ENCODE measurements at regions of chr1 and their contacts with region 1.

Region 1: DNA sequence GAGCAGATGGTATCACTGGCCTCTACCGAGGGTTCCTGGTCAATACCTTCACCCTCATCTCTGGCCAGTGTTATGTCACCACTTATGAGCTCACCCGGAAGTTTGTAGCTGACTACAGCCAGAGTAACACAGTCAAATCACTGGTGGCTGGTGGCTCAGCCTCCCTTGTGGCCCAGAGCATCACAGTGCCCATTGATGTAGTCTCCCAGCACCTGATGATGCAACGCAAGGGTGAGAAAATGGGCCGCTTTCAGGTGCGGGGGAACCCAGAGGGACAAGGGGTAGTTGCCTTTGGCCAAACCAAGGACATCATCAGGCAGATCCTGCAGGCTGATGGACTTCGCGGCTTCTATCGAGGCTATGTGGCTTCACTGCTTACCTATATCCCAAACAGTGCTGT is 6.1 kb downstream of the SLC25A44 start:
- DNase-seq: no peak
- ATAC-seq: no peak
- H3K4me3 ChIP-seq: no peak overlapping the region
- H3K27ac ChIP-seq: no peak overlapping the region
- H3K4me1 ChIP-seq: peaks cover 0 to 5% (median 0%) of the 10 kb centered on the region in 3 donors
- H3K27me3 ChIP-seq: no peaks in the 10 kb centered on the region
- CTCF ChIP-seq: no peak

Region 2: DNA sequence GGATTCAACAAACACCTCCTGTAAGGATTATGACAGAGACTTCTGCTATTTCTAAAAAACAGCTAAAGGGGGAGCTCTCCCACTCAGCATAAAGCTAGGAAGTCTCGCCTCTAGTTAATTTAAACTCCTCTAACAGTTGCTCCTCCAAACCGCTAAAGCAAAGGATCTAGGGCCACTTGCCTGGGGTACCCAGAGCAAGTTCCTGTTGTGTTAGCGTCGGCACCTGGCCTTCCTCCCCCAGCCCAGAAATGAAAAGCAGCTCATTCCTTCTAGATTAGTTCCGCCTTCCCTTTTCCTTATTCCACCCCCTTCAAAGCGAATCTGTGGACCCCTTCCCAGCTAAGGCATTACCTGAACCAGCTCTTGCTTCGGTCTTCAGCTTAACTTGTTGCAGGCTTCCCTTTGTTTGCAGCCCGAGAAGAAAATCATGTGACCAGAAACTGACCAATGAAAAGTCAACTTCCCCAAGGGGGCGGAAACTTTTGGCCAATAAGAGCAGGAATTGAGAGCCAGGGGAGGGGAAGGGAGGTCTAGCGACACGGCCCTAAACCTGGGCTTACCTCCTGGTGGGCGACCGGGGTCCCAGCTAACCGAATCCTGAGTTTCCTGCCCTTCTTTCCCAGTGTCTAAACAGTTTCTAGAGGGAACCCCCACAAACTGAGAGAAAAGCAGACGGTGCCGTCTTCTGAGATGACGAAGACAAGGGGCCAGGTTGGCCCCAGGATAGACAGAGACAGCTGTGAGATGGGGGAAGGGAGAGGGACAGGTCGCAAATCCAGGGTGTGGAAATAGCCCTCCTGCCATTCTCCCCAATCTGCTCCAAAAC is 1244.1 kb before region 1 on chr1 and contains the start of gene PBXIP1:
- intact Hi-C with region 1: no loop called
- DNase-seq: peak in 3 of 6 donors; percentile 84 to 89 (median 84)
- ATAC-seq: peak; percentile 88 to 94 (median 92)
- H3K4me3 ChIP-seq: peak within 1 kb of the TSS; percentile 8 to 53 (median 36)
- H3K27ac ChIP-seq: peak within 1 kb of the TSS; percentile 61 to 80 (median 75)
- H3K4me1 ChIP-seq: peaks cover 15 to 23% (median 18%) of the 10 kb centered on the region in 3 donors
- H3K27me3 ChIP-seq: no peaks in the 10 kb centered on the region
- CTCF ChIP-seq: no peak
- total RNA-seq, gene PBXIP1: 15.6 to 53.1 (median 24.9) TPM

Region 3: GRCh38 chr1:155816351-155816750 is 383.7 kb before region 1 on chr1:
- intact Hi-C with region 1: no loop called
- DNase-seq: no peak
- ATAC-seq: no peak
- H3K4me3 ChIP-seq: no peak overlapping the region
- H3K27ac ChIP-seq: no peak overlapping the region
- H3K4me1 ChIP-seq: no peaks in the 10 kb centered on the region
- H3K27me3 ChIP-seq: no peaks in the 10 kb centered on the region
- CTCF ChIP-seq: no peak

Region 4: DNA sequence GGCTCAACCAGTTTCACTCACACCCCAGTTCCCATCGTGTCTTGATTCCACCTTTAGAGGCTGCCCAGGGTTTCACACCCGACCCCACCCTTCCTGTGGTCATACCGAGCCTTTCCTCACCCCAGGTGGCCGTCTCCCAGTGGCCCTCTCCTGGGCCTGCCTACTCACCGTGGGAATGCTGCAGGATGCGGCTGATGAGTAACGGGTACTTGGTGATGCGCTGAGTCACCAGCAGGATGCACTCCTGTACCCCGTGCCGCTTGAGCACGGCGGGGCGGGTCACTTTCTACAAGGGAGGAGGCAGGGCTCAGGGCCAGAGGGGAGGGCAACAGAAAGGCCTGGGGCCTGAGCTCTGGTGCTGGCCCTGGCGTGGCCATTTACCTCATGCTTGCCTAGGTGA is 238.1 kb before region 1 on chr1:
- intact Hi-C with region 1: no loop called
- DNase-seq: no peak
- ATAC-seq: peak in 3 of 4 donors; percentile 33 to 56 (median 45)
- H3K4me3 ChIP-seq: no peak overlapping the region
- H3K27ac ChIP-seq: no peak overlapping the region
- H3K4me1 ChIP-seq: no peaks in the 10 kb centered on the region
- H3K27me3 ChIP-seq: no peaks in the 10 kb centered on the region
- CTCF ChIP-seq: no peak

Region 5: GRCh38 chr1:156154317-156154749 is 45.7 kb before region 1 on chr1:
- intact Hi-C with region 1: loop called in 1 of 3 experiments (anchors 10 kb)
- DNase-seq: no peak
- ATAC-seq: peak in 3 of 4 donors; percentile 17 to 60 (median 45)
- H3K4me3 ChIP-seq: no peak overlapping the region
- H3K27ac ChIP-seq: no peak overlapping the region
- H3K4me1 ChIP-seq: no peaks in the 10 kb centered on the region
- H3K27me3 ChIP-seq: no peaks in the 10 kb centered on the region
- CTCF ChIP-seq: no peak